Activated B cell treated with CpG ODN at 0.5 μM for 24 hours (primary cell): ENCODE measurements at regions of chr1 and their contacts with region 1.

Region 1: DNA sequence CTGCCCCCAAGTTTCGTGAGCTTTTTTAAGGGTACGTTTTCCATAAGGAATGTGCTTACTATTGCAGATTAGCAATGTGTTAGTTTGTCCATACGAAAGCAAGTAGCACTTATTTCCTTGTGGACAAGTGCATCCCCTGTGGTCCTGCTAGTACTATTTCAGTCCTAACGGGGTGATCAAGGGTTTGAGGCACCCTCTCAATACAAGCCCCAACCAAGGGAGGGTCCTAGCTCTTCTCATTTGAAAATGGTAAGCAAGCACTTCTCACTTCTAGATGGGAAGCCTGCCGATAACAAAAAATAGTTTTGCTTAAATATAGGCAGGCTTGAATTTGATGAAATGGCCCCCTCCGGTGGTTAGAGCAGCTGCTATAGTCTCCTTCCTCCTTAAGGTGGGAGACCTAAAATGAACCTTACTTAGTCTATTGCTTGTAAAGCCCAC is 64.0 kb upstream of the HMCN1 start:
- DNase-seq: no peak
- ATAC-seq: peak; percentile 81
- H3K4me3 Mint-ChIP-seq: no peak overlapping the region
- H3K27ac Mint-ChIP-seq: peak overlapping the region; percentile 43
- H3K4me1 Mint-ChIP-seq: peaks cover 33% of the 10 kb centered on the region
- H3K27me3 Mint-ChIP-seq: no peaks in the 10 kb centered on the region
- CTCF ChIP-seq: no peak

Region 2: DNA sequence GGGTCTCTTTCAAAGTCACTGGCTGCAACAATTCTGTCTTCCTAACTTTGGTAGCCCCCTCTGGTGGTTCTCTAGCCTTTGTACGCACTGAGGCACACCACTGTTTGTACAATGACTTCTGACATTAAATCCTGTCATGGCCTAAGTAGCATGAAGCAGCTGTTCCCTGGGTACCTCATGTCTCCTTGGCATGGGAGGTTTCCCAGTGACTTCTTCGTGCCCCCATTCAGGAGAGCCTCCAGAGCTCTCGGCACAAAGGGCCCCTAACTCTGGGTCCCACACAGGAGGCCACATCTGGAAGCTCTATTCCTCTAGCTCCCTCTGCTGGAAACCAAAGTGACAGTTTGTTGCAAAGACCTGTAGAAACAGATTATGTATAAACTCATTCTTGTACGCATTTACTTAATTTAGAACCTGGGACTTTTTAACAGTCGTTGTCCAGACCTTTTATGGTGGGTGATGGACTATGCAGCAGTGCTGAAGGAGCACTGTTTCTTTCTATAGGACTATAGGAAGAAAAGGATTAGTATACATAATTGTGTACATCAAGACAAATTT is 499.8 kb before region 1 on chr1:
- CTCF ChIA-PET with region 1: interaction called, 14 read pairs
- POLR2A ChIA-PET with region 1: no interaction called
- intact Hi-C with region 1: no loop called
- DNase-seq: peak; percentile 30
- ATAC-seq: peak; percentile 83
- H3K4me3 Mint-ChIP-seq: peak overlapping the region; percentile 19
- H3K27ac Mint-ChIP-seq: no peak overlapping the region
- H3K4me1 Mint-ChIP-seq: peaks cover 8% of the 10 kb centered on the region
- H3K27me3 Mint-ChIP-seq: no peaks in the 10 kb centered on the region
- CTCF ChIP-seq: peak; percentile 82

Region 3: DNA sequence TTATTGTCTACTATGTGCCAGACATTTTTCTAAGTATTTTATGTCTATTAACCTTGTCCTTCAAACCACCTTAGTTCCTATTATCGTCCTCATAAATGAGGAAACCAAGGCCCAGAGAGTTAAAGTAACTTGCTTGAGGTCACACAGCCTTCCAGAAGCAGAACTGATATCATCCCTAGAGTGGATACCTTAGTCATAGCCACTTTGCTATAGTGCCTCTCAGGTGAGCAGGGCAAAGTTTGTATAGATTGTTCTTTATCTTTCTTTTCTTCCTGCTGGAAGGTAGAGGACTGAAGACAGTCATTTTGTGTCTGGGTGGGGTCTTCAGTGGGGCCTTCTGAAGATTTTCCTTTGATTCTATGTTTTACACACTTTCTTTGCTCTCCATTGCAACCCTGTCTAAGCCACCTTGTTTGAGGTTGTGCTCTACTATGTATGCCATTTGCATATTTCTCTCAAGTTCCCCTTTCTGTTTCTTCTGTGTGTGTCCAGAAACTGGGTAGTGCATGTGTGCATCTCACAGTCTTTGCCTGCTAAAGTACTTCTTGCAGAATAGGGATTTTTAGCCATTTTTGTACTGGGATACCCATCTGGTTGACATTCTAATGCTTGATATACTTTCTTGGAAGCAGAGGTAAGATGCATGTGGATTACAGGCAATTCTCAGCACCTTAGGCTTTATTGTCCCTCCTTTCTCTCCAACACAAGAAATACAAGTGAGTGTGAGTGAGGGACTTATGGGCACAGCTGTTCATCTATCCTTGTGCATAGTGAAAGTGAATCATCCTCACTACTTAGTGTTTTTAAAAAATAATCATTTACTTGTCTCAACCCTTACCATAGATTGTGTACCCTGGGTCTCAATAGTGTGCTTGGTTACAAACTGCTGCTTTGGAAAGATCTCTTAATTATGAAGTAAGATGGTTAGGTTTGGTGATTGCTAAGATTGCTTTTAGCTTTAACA is 143.6 kb before region 1 on chr1:
- CTCF ChIA-PET with region 1: interaction called, 5 read pairs
- POLR2A ChIA-PET with region 1: no interaction called
- intact Hi-C with region 1: loop called (anchors 5 kb)
- DNase-seq: no peak
- ATAC-seq: peak; percentile 97
- H3K4me3 Mint-ChIP-seq: peak overlapping the region; percentile 1
- H3K27ac Mint-ChIP-seq: peak overlapping the region; percentile 77
- H3K4me1 Mint-ChIP-seq: peaks cover 21% of the 10 kb centered on the region
- H3K27me3 Mint-ChIP-seq: no peaks in the 10 kb centered on the region
- CTCF ChIP-seq: no peak

Region 4: DNA sequence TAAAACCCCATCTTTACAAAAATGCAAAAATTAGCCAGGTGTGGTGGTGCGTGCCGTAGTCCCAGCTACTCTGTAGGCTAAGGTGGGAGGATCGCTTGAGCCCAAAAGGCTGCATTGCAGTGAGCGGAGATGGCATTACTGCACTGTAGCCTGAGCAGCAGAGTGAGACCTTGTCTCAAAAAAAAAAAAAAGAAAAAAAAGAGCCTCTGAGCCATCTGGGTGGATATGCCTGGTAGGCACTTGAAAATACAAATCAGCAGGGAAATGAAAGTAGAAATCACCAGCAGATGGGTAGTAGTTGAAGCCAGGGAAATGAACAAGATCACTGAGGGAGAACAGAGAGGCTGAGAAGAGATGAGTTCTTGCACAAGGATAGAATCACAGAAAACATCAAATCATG is 67.0 kb before region 1 on chr1:
- CTCF ChIA-PET with region 1: interaction called, 11 read pairs
- POLR2A ChIA-PET with region 1: interaction called, 9 read pairs
- intact Hi-C with region 1: loop called (anchors 2 kb)
- DNase-seq: peak; percentile 26
- ATAC-seq: peak; percentile 92
- H3K4me3 Mint-ChIP-seq: no peak overlapping the region
- H3K27ac Mint-ChIP-seq: no peak overlapping the region
- H3K4me1 Mint-ChIP-seq: peaks cover 42% of the 10 kb centered on the region
- H3K27me3 Mint-ChIP-seq: no peaks in the 10 kb centered on the region
- CTCF ChIP-seq: no peak

Region 5: GRCh38 chr1:185652348-185652747 is 17.9 kb before region 1 on chr1:
- CTCF ChIA-PET with region 1: interaction called, 12 read pairs
- POLR2A ChIA-PET with region 1: no interaction called
- intact Hi-C with region 1: no loop called
- DNase-seq: no peak
- ATAC-seq: no peak
- H3K4me3 Mint-ChIP-seq: no peak overlapping the region
- H3K27ac Mint-ChIP-seq: no peak overlapping the region
- H3K4me1 Mint-ChIP-seq: no peaks in the 10 kb centered on the region
- H3K27me3 Mint-ChIP-seq: no peaks in the 10 kb centered on the region
- CTCF ChIP-seq: no peak